OCI-LY7 (cell line): ENCODE measurements at regions of chr12 and their contacts with region 1.

Region 1: DNA sequence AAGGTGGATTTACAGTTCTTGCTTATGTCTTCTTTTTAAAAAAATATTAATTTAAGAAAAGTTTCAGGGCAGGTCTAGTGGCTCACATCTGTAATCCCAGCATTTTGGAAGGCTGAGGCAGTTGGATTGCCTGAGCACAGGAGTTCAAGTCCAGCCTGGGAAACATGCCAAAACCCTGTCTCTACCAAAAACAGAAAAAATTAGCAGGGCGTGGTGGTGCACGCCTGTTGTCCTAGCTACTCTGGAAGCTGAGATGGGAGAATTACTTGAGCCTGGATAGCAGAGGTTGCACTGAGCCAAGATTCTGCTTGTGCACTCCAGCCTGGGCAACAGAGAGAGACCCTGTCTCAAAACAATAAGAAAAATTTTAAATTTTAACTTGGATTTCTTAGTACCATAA is 5.4 kb upstream of the TAS2R46 start:
- DNase-seq: no peak
- H3K4me3 ChIP-seq: no peak overlapping the region
- H3K27ac ChIP-seq: no peak overlapping the region
- H3K4me1 ChIP-seq: no peaks in the 10 kb centered on the region
- CTCF ChIP-seq: no peak

Region 2: GRCh38 chr12:11015775-11016430 is 51.6 kb before region 1 on chr12:
- CTCF ChIA-PET with region 1: no interaction called
- POLR2A ChIA-PET with region 1: no interaction called
- intact Hi-C with region 1: loop called (anchors 1 kb)
- DNase-seq: no peak
- H3K4me3 ChIP-seq: no peak overlapping the region
- H3K27ac ChIP-seq: no peak overlapping the region
- H3K4me1 ChIP-seq: no peaks in the 10 kb centered on the region
- CTCF ChIP-seq: no peak

Region 3: DNA sequence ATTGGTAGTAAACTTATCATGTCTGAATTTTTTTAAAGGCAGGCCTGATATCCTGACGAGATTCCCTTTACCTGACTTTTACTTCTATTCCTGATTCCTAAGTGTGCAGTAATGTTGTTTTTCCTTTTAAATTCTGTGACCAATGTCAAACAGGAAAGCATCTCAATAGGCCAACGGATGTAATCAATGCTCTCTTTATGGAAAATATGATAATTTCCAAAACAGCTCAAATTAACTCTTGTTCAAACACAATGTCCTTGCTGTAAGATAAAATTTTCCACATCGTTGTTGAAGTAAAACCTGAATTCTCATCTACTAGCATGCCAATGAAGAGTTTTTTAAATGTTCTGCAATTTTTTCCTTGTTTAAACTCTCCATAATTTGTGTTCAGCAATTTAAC is 28.3 kb before region 1 on chr12:
- CTCF ChIA-PET with region 1: no interaction called
- POLR2A ChIA-PET with region 1: no interaction called
- intact Hi-C with region 1: loop called (anchors 1 kb)
- DNase-seq: no peak
- H3K4me3 ChIP-seq: no peak overlapping the region
- H3K27ac ChIP-seq: no peak overlapping the region
- H3K4me1 ChIP-seq: no peaks in the 10 kb centered on the region
- CTCF ChIP-seq: no peak

Region 4: GRCh38 chr12:11344500-11344899 is 277.0 kb after region 1 on chr12:
- CTCF ChIA-PET with region 1: no interaction called
- POLR2A ChIA-PET with region 1: no interaction called
- intact Hi-C with region 1: no loop called
- DNase-seq: no peak
- H3K4me3 ChIP-seq: no peak overlapping the region
- H3K27ac ChIP-seq: no peak overlapping the region
- H3K4me1 ChIP-seq: no peaks in the 10 kb centered on the region
- CTCF ChIP-seq: no peak